Ascending aorta (tissue), 2 donors: ENCODE measurements at regions of chr1 and their contacts with region 1.

Region 1: DNA sequence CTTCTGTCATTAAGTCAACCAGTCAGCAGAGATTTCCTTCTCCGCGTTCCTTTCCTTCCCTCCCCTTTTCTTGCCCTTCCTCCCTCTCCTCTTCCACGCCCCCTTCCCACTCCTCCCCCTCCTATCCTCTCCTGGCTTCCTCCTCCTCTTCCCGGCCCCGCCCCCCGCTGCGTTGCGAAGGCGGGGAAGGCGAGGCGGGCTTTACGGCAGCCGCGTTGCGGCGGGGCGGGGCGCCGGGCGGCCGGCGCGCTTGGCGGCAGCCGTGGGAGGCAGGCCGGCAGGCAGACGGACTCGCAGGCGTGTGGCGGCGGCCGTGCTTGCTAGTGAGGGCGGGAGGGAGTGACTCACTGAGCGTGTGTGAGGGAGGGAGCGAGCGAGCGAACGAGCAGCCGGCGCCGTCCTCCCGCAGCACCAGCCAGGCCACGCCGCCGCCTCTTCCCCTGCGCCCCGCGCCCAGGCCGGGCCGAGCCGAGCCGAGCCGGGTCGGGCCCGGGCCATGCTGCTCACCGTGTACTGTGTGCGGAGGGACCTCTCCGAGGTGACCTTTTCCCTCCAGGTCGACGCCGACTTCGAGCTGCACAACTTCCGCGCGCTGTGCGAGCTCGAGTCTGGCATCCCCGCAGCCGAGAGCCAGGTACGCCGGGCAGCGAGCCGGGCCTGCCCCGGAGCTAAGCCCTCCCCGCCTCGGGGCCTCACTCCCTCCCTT is at the start of gene DDI2:
- DNase-seq: peak; percentile 89 to 98
- H3K4me3 ChIP-seq: peak within 1 kb of the TSS; percentile 86 to 95
- H3K27ac ChIP-seq: peak within 1 kb of the TSS; percentile 94 to 96
- H3K4me1 ChIP-seq: peaks cover 0 to 18% of the 10 kb centered on the region in 2 donors
- H3K27me3 ChIP-seq: no peaks in the 10 kb centered on the region
- CTCF ChIP-seq: no peak
- total RNA-seq, gene DDI2: 13.0 TPM

Region 2: DNA sequence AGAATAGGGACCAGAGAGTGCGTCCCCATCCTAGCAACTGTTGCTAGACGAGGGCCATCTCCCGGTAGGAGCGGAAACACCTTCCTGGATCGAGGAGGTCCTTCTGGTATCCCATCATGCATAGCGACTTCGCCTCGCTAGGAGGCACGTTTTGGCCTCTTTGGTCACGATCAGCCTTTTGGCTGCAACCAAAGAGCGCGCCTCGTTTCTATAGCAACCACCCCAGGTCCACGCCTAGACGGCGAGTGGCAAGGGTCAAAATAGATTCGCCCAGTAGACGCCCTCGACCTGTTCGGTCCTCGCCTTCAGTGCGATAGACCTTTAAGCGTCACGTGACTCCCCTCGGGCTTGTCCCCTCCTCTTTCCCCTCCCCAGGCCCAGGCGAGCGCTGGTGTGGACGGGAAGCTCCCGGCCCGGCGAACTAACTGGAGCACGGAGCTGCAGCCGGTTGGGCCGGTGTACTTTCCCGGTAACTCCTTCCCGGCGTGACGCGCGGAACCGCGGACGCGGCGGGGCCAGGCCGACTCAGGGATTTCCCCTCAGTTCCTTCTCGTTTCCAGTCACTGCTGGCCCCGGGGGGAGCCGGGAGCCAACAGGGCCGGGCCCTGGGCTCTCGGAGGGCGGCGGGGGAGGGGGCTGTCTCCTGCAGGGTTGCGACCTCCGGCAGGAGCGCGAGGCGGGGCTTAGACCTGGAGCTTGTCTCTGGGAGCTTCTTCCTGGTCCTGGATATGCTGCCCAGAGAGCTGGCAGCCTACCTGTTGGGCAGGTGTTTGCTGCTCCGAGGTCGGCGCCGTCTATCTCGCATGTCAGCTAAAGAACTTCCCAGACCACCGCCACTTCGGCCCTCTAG is 90.6 kb before region 1 on chr1 and contains the start of gene DNAJC16:
- intact Hi-C with region 1: loop called (anchors 5 kb)
- DNase-seq: peak; percentile 98 to 100
- H3K4me3 ChIP-seq: peak within 1 kb of the TSS; percentile 94 to 98
- H3K27ac ChIP-seq: peak within 1 kb of the TSS; percentile 93 to 94
- H3K4me1 ChIP-seq: peaks cover 7 to 25% of the 10 kb centered on the region in 2 donors
- H3K27me3 ChIP-seq: no peaks in the 10 kb centered on the region
- CTCF ChIP-seq: peak in 2 of 3 experiments; percentile 19 to 29
- total RNA-seq, gene DNAJC16: 11.4 TPM

Region 3: DNA sequence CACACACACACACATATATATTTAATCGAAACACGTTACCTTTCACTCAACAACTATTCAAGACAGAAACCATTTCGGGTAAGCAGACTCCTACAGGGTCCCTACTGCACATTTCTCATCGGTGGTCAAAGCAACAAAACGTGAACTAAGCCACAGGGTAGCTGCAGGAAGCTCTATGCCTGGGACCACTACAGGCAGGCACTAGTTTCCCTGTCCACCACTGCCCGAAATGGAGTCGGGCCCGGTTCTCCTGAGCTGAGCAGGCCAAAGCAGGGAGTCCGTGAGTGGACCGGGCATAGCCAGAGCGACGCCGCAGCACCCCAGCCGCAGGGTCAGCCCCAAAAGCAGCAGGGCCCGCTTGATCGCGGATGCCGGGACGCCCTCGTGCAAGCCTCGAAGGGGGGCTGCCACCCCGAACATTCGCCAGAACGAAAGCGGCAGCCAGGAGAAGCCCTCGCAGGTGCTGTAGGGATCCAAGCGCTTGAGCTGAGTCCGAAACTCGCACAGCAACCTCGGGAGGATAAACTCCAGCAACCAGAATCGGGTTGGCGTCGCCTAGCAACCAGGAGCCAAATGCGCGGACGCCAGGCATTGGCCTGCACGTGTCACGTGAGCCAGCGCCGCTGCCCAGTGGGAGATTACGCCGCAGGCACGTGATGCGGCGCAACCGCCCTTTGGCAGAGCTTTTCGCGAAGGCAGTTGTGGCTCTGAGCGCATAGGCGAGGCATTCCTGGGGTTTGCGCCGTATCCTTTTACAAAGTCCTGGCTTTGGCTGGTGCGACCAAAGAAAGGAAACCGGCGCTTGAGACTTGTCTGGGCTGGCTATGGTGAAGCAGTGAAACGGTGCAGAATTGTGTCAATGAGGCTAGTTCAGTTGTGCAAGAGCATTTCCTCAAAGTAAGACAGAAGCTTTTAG is 14.0 kb before region 1 on chr1:
- intact Hi-C with region 1: loop called (anchors 1 kb)
- DNase-seq: peak; percentile 92 to 98
- H3K4me3 ChIP-seq: peak overlapping the region; percentile 85 to 89
- H3K27ac ChIP-seq: peak overlapping the region; percentile 69 to 74
- H3K4me1 ChIP-seq: peaks cover 0 to 4% of the 10 kb centered on the region in 2 donors
- H3K27me3 ChIP-seq: no peaks in the 10 kb centered on the region
- CTCF ChIP-seq: no peak

Region 4: DNA sequence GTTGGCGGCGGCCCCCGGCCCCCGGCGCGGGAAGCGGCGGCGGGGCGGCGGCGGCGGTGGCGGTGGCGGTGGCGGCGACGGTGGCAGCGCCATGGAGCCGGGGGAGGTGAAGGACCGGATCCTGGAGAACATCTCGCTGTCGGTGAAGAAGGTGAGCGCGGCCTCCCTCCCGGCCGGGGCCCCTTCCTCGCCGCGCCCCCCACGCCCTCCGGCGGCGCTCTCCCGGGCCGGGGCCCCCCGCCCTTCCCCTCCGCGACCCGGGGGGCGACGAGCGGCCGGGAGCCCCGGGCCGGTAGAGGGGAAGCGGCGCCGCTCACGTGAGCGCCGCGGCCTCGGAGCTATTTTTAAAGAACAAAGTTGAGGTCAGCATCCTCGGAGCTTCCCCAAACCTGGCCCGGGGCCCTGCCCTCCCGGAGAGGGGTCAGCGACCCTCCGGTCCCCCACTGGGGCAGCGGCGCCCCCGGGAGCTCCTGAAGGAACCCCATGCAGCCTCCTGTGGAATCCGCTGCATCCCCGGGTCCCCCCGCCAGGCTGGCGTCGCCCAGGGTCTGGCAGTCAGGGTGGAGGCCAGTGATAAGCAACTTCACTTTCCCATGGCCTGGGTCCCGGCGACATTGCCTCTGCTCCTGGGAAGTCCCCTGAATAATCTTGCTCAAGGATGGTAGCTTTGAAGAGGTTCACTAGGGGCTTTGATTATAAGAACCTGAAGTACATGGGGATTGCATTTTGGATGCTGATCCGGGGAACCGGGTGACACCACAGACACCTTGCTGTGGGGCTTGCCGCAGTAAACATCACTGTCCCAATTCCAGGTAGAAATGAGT is 67.4 kb after region 1 on chr1:
- intact Hi-C with region 1: loop called (anchors 5 kb)
- DNase-seq: peak in 1 of 2 donors; percentile 81
- H3K4me3 ChIP-seq: peak overlapping the region; percentile 94 to 99
- H3K27ac ChIP-seq: peak overlapping the region; percentile 97 to 99
- H3K4me1 ChIP-seq: peaks cover 0 to 14% of the 10 kb centered on the region in 2 donors
- H3K27me3 ChIP-seq: no peaks in the 10 kb centered on the region
- CTCF ChIP-seq: no peak

Region 5: DNA sequence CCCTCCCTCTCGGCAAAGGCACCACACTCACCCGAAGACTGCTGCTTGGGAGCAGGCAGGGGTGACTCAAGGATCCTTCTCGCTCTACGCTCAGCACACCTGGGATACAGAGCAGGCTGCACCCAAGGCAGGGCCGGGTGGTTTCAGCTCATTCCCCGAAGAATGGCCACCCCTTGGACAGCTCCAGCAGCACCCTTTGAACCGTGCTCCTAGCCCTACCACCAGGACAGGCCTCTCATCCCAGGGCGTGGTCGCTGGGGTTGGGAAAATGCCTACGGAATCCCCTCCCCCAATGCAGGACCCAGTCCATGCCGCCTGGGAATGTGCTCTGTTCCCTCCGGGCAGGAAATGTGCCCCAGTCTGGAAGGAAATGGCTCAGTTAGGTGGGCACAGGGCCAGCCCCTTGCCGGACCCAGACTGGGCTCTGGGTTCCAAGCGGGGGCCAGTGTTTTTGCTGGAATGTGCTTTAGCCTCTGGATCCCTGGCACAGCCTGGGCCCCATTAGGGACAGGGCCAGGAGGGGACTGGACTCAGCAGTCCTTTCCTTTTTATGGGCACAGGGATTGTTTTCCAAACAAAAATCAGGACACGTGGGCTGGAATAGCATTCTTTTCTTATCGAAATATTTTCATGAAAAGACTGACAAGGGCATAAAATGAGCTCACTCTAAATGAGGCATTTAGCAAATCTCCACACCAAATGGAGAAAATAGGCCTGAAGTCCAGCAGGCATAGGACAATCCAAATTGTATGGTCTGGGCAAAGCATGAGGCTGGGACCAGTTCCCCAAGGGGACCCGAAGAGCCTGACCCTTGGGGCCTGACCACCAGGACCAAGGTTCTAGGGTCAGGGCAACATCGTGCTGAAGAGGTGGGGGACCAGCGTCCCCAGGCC is 132.3 kb after region 1 on chr1:
- intact Hi-C with region 1: loop called (anchors 5 kb)
- DNase-seq: peak; percentile 73 to 97
- H3K4me3 ChIP-seq: peak overlapping the region; percentile 48 to 56
- H3K27ac ChIP-seq: peak overlapping the region; percentile 96 to 98
- H3K4me1 ChIP-seq: peaks cover 31 to 61% of the 10 kb centered on the region in 2 donors
- H3K27me3 ChIP-seq: no peaks in the 10 kb centered on the region
- CTCF ChIP-seq: no peak

Region 6: GRCh38 chr1:17161137-17161740 is 1543.9 kb after region 1 on chr1:
- intact Hi-C with region 1: no loop called
- DNase-seq: no peak
- H3K4me3 ChIP-seq: no peak overlapping the region
- H3K27ac ChIP-seq: no peak overlapping the region
- H3K4me1 ChIP-seq: no peaks in the 10 kb centered on the region
- H3K27me3 ChIP-seq: no peaks in the 10 kb centered on the region
- CTCF ChIP-seq: no peak

Region 7: DNA sequence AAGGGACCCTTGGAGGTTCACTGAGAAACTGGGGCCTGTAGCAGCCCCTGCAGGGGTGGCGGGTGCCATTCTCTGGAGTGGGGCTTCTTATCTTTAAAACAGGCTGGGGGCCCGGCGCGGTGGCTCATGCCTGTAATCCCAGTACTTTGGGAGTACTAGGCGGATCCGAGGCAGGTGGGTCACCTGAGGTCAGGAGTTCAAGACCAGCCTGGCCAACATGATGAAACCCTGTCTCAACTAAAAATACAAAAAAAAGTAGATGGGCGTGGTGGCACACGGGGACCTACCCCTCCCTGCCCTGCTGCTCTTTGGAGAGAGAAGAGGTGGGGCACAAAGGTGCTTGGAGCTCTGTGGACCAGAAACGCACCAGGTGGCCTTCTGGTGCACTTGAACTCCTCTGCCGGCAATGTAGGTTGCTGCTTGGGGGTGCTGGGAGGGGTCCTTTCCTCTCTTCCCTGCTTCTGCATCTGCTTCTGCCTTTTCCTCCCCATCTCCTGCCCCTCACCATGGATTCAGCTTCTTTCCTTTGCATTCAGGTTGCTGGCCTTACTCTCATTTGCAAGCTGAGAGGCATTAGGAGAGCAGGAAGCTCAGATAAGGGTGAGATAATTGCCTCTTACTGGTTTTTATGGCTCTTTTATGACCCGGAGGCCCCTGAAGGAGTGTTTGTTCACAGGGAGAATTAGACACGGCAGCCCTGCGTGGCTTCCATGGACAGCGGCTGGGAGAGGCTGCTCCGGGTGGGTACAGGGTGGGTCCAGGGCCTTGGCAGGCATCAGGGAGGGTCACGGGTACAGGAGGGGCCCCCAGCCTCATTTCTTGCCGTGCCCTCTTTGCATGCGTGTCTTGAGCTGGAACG is 1979.6 kb after region 1 on chr1:
- intact Hi-C with region 1: no loop called
- DNase-seq: no peak
- H3K4me3 ChIP-seq: no peak overlapping the region
- H3K27ac ChIP-seq: peak overlapping the region; percentile 72 to 83
- H3K4me1 ChIP-seq: peaks cover 12 to 70% of the 10 kb centered on the region in 2 donors
- H3K27me3 ChIP-seq: no peaks in the 10 kb centered on the region
- CTCF ChIP-seq: no peak